ENCODE measurements at regions of chr22 and their contacts with region 1.

Region 1: DNA sequence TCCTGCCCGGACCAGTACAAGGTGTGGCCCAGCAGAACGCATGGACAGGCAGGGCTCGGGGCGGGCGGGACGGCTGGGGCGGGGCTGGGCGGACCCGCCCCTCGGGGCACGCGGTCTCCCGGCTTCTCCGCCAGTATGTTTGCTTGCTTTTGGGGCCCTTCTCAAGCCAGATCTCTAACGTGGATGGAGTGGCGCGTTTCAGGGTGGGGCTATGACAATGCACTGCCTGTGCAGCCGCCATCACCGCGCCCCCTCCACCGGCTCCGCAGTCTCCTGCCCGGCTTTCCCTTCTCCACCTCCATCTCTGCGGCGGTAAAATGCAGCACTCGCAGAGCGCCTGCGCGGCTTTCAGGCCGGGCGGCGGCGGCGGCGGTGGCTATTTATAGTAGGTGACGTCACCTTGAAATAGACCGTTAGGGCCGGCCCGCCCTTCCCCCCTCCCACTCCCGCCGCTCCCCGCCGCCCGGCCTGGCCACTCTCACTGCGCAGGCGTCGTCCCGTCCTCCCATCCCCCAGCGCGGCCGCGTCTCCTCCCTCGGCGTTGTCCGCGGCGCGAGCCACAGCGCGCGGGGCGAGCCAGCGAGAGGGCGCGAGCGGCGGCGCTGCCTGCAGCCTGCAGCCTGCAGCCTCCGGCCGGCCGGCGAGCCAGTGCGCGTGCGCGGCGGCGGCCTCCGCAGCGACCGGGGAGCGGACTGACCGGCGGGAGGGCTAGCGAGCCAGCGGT is at the start of gene YWHAH:
- DNase-seq: peak; percentile 95
- H3K4me3 ChIP-seq: peak within 1 kb of the TSS; percentile 68
- H3K27ac ChIP-seq: peak within 1 kb of the TSS; percentile 96
- H3K4me1 ChIP-seq: peaks cover 22% of the 10 kb centered on the region
- H3K27me3 ChIP-seq: no peaks in the 10 kb centered on the region
- CTCF ChIP-seq: no peak
- total RNA-seq, gene YWHAH: 161 and 177 TPM in 2 replicates

Region 2: DNA sequence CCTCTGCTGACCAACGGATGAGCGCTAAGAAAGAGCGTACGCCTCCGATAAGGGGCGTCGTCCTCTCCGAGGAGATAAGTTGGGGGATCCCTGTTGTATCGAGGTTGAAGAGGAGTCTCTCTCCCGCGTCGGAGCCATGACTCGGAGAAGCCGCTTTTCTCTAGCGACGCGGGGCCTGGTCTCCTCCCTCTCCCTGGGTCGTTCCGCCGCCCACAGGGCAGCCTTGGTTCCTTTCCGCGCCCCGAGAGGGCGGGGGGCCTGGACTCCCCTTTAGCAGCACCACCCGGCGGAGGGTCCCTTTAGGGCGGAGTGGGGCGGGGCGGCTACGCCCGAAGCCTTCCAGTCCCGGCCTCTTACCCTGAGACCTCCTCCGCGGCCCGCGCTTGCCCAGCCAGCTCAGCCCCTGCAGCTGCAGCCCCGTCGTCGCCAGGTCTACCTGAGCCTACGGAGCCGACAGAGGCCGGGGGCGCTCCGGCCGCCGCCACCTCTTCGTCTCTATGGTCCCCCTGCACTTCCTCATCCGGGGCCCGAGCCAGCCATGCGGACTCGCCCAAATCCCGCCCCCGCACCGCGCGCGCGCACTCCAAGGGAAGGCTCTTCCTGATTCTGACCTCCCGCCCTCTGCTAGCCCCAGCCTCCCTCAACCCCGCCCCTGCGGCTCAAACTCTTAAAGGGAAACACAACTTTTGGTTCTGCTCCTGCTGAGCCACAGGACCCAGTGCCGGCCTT is 194.3 kb before region 1 on chr22 and contains the start of gene PRR14L:
- CTCF ChIA-PET with region 1: no interaction called
- POLR2A ChIA-PET with region 1: interaction called, 4 read pairs
- intact Hi-C with region 1: loop called (anchors 10 kb)
- DNase-seq: peak; percentile 97
- H3K4me3 ChIP-seq: peak within 1 kb of the TSS; percentile 76
- H3K27ac ChIP-seq: peak within 1 kb of the TSS; percentile 84
- H3K4me1 ChIP-seq: peaks cover 18% of the 10 kb centered on the region
- H3K27me3 ChIP-seq: no peaks in the 10 kb centered on the region
- CTCF ChIP-seq: no peak
- total RNA-seq, gene PRR14L: 61.0 and 65.4 TPM in 2 replicates

Region 3: DNA sequence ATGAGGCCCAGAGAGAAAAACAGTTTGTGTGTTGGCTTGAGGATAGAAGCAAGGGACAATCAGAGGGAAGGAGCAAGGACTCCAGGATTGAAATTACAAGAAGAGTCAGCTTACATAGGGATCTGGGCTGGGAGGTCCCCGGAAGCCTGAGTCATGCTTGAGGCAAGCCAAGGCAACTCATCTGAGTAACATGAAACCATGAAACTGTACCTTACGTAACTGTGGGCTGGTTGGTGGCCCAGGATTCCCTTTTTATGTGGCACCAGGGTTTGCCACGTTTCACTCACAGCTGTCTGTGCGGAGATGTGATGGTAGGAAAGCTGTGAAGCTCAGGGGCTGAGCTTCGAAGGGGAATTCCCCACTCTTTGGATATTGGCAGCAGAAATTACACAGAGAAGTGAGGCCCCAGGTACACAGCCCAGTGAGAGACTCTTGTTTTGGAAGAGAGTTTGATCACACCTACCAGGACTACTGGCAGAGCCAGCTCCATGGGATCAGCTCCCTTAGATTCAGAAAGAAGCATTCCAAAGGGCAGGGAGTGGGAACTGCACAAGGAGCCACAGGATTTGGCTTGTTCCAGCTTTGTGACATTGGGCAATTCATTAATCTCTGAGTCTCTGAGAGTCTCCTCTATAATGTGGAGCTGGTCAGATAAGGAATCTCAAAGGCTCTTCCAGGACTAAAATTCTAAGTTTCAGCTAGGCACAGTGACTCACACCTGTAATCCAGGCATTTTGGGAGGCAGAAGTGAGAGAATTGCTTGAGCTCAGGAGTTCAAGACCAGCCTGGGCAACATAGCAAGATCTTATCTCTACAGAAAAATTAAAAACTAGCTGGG is 106.8 kb after region 1 on chr22:
- CTCF ChIA-PET with region 1: no interaction called
- POLR2A ChIA-PET with region 1: no interaction called
- intact Hi-C with region 1: no loop called
- DNase-seq: peak; percentile 77
- H3K4me3 ChIP-seq: no peak overlapping the region
- H3K27ac ChIP-seq: no peak overlapping the region
- H3K4me1 ChIP-seq: peaks cover 12% of the 10 kb centered on the region
- H3K27me3 ChIP-seq: no peaks in the 10 kb centered on the region
- CTCF ChIP-seq: no peak

Measured in A673 (cell line).